ENCODE measurements at regions of chr3 and their contacts with region 1.

Region 1: GRCh38 chr3:169241991-169242707 is 421.4 kb downstream of the MECOM start:
- DNase-seq: peak; percentile 87
- H3K4me3 ChIP-seq: peak overlapping the region; percentile 40 to 79 (median 42)
- H3K27ac ChIP-seq: peak overlapping the region; percentile 97
- H3K4me1 ChIP-seq: peaks cover 64% of the 10 kb centered on the region
- H3K27me3 ChIP-seq: no peaks in the 10 kb centered on the region
- CTCF ChIP-seq: no peak
- POLR2A ChIP-seq: peak; percentile 42

Region 2: GRCh38 chr3:168884353-168884903 is 357.7 kb before region 1 on chr3:
- CTCF ChIA-PET with region 1: no interaction called
- POLR2A ChIA-PET with region 1: no interaction called
- dilution Hi-C with region 1: no loop called
- intact Hi-C with region 1: no loop called
- DNase-seq: peak; percentile 86
- H3K4me3 ChIP-seq: no peak overlapping the region
- H3K27ac ChIP-seq: no peak overlapping the region
- H3K4me1 ChIP-seq: peaks cover 12% of the 10 kb centered on the region
- H3K27me3 ChIP-seq: no peaks in the 10 kb centered on the region
- CTCF ChIP-seq: no peak
- POLR2A ChIP-seq: no peak

Region 3: GRCh38 chr3:169218314-169218983 is 23.7 kb before region 1 on chr3:
- CTCF ChIA-PET with region 1: interaction called, 43 read pairs
- POLR2A ChIA-PET with region 1: interaction called, 3 read pairs
- dilution Hi-C with region 1: no loop called
- intact Hi-C with region 1: loop called (anchors 1 kb)
- DNase-seq: peak; percentile 98
- H3K4me3 ChIP-seq: no peak overlapping the region
- H3K27ac ChIP-seq: peak overlapping the region; percentile 66
- H3K4me1 ChIP-seq: peaks cover 23% of the 10 kb centered on the region
- H3K27me3 ChIP-seq: no peaks in the 10 kb centered on the region
- CTCF ChIP-seq: peak; percentile 74 to 89
- POLR2A ChIP-seq: no peak

Region 4: DNA sequence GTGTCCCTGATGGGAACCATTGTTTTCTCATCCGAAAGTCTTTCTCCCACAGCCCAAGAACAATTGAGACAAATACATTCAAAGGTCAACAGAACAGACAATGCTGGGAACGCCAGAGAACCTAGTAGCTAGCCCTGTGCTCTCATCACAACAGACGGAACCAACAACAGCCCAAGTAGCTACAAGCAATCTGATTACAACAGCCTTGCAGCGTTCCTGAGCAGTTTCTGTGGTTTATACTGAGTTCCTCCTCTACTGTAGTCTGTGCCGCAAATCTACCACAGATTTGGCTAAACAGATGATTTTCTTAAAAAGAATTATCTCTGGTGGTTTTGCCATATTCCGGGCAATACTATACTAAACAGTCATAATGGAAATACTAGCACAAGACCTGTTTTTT is 14.2 kb before region 1 on chr3:
- CTCF ChIA-PET with region 1: interaction called, 25 read pairs
- POLR2A ChIA-PET with region 1: interaction called, 6 read pairs
- dilution Hi-C with region 1: no loop called
- intact Hi-C with region 1: loop called (anchors 1 kb)
- DNase-seq: peak; percentile 88
- H3K4me3 ChIP-seq: no peak overlapping the region
- H3K27ac ChIP-seq: peak overlapping the region; percentile 3
- H3K4me1 ChIP-seq: peaks cover 27% of the 10 kb centered on the region
- H3K27me3 ChIP-seq: no peaks in the 10 kb centered on the region
- CTCF ChIP-seq: no peak
- POLR2A ChIP-seq: no peak

Region 5: GRCh38 chr3:169286214-169286613 is 44.1 kb after region 1 on chr3:
- CTCF ChIA-PET with region 1: no interaction called
- POLR2A ChIA-PET with region 1: no interaction called
- dilution Hi-C with region 1: no loop called
- intact Hi-C with region 1: loop called (anchors 2 kb)
- DNase-seq: no peak
- H3K4me3 ChIP-seq: no peak overlapping the region
- H3K27ac ChIP-seq: no peak overlapping the region
- H3K4me1 ChIP-seq: peaks cover 20% of the 10 kb centered on the region
- H3K27me3 ChIP-seq: no peaks in the 10 kb centered on the region
- CTCF ChIP-seq: no peak
- POLR2A ChIP-seq: no peak

Region 6: GRCh38 chr3:169430707-169431404 is 188.7 kb after region 1 on chr3:
- CTCF ChIA-PET with region 1: no interaction called
- POLR2A ChIA-PET with region 1: no interaction called
- dilution Hi-C with region 1: no loop called
- intact Hi-C with region 1: loop called (anchors 5 kb)
- DNase-seq: peak; percentile 90
- H3K4me3 ChIP-seq: no peak overlapping the region
- H3K27ac ChIP-seq: peak overlapping the region; percentile 79
- H3K4me1 ChIP-seq: peaks cover 30% of the 10 kb centered on the region
- H3K27me3 ChIP-seq: no peaks in the 10 kb centered on the region
- CTCF ChIP-seq: no peak
- POLR2A ChIP-seq: no peak

Region 7: DNA sequence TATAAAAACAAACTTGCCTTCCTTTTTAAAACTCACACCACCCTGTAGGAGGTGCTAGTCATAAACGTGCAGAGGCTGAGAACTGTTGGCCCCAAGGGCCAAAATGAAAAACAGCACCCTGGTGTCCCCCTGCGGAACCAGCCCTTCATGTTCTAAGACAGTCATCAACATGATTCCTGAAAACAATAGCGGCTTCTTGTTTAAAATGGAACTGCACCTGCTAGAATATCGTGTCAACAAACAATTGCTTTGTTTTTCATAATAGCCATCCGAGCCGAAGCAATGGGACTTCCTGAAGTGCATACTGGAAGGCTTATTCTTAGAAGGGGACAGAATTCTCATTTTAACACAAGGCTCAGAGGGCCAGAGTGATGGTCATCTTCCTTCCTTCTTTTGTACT is 377.6 kb after region 1 on chr3:
- CTCF ChIA-PET with region 1: no interaction called
- POLR2A ChIA-PET with region 1: no interaction called
- dilution Hi-C with region 1: no loop called
- intact Hi-C with region 1: no loop called
- DNase-seq: peak; percentile 73
- H3K4me3 ChIP-seq: no peak overlapping the region
- H3K27ac ChIP-seq: peak overlapping the region; percentile 9
- H3K4me1 ChIP-seq: peaks cover 12% of the 10 kb centered on the region
- H3K27me3 ChIP-seq: no peaks in the 10 kb centered on the region
- CTCF ChIP-seq: peak in 1 of 2 donors; percentile 15
- POLR2A ChIP-seq: no peak

Measured in endothelial cell of umbilical vein (primary cell).